ENCODE measurements at regions of chr11 and their contacts with region 1.

Region 1: GRCh38 chr11:6889835-6890234 is 2.5 kb downstream of the OR2D2 start:
- DNase-seq: no peak
- H3K4me3 ChIP-seq: no peak overlapping the region
- H3K27ac ChIP-seq: no peak overlapping the region
- H3K4me1 ChIP-seq: no peaks in the 10 kb centered on the region
- H3K27me3 ChIP-seq: no peaks in the 10 kb centered on the region
- CTCF ChIP-seq: no peak
- EP300 ChIP-seq: no peak
- POLR2A ChIP-seq: no peak

Region 2: GRCh38 chr11:7826316-7826715 is 936.5 kb after region 1 on chr11:
- in situ Hi-C with region 1: no loop called
- intact Hi-C with region 1: loop called (anchors 5 kb)
- DNase-seq: no peak
- H3K4me3 ChIP-seq: no peak overlapping the region
- H3K27ac ChIP-seq: no peak overlapping the region
- H3K4me1 ChIP-seq: no peaks in the 10 kb centered on the region
- H3K27me3 ChIP-seq: no peaks in the 10 kb centered on the region
- CTCF ChIP-seq: no peak
- EP300 ChIP-seq: no peak
- POLR2A ChIP-seq: no peak

Measured in transverse colon (tissue), 4 donors.